K562 (cell line): ENCODE measurements at regions of chr1 and their contacts with region 1.

Region 1: DNA sequence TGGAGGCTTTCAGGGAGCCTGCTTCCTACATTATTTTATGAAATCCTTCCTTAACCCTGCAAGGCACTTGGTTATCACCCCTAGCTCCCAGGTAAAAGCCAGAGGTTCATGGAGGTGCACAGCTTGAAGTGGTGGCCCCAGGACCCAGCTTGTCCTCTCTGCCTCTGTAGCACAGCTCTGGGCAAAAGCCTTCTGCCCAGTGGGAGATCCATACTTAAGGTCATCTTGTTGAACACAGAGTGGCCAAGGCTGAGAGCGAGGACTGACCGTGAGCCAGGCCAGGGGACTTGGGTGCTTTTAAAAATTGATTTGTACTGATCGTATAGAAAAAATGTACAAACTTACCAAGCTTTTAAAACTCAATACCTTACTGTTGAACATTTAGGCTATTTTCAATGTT is 33.4 kb downstream of the KCNA2 start:
- DNase-seq: no peak
- ATAC-seq: no peak
- H3K4me3 ChIP-seq: no peak overlapping the region
- H3K27ac ChIP-seq: no peak overlapping the region
- H3K4me1 ChIP-seq: no peaks in the 10 kb centered on the region
- H3K27me3 ChIP-seq: peaks cover 3 to 5% of the 10 kb centered on the region in 2 experiments; a peak in 3 of 5 replicates
- CTCF ChIP-seq: no peak
- EP300 ChIP-seq: no peak
- POLR2A ChIP-seq: no peak
- RAD21 ChIP-seq: no peak

Region 2: GRCh38 chr1:110482662-110483307 is 90.0 kb before region 1 on chr1:
- CTCF ChIA-PET with region 1: no interaction called
- POLR2A ChIA-PET with region 1: no interaction called
- in situ Hi-C with region 1: no loop called
- intact Hi-C with region 1: no loop called
- DNase-seq: no peak
- ATAC-seq: no peak
- H3K4me3 ChIP-seq: no peak overlapping the region
- H3K27ac ChIP-seq: no peak overlapping the region
- H3K4me1 ChIP-seq: peaks cover 0 to 7% of the 10 kb centered on the region in 2 experiments; a peak in 3 of 5 replicates
- H3K27me3 ChIP-seq: peaks cover 26 to 82% of the 10 kb centered on the region in 2 experiments
- CTCF ChIP-seq: no peak
- EP300 ChIP-seq: no peak
- POLR2A ChIP-seq: no peak
- RAD21 ChIP-seq: no peak

Region 3: DNA sequence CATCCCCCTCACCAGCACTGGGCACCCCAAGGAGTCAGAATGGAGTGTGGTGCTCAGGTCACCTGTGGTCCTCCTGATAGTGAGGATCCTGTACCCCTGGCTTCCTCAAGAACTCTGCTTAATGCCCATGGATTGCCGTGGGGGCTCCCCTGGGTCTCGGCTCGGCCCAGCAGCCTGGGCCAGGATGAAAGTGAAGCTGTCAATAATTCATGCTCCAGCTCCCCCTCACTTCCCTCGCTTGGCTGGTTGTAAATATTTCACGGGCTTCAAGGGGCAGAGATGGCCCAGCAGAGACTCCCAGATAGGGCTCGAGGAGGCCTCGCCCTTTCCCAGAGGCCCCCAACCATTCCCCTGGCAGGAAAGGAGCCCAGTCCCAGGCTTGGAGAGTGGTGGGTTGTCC is 11.2 kb before region 1 on chr1:
- CTCF ChIA-PET with region 1: no interaction called
- POLR2A ChIA-PET with region 1: interaction called, 11 read pairs
- in situ Hi-C with region 1: no loop called
- intact Hi-C with region 1: no loop called
- DNase-seq: no peak
- ATAC-seq: no peak
- H3K4me3 ChIP-seq: no peak overlapping the region
- H3K27ac ChIP-seq: no peak overlapping the region
- H3K4me1 ChIP-seq: no peaks in the 10 kb centered on the region
- H3K27me3 ChIP-seq: peaks cover 6 to 42% of the 10 kb centered on the region in 2 experiments; a peak in 3 of 5 replicates
- CTCF ChIP-seq: no peak
- EP300 ChIP-seq: no peak
- POLR2A ChIP-seq: no peak
- RAD21 ChIP-seq: no peak

Region 4: DNA sequence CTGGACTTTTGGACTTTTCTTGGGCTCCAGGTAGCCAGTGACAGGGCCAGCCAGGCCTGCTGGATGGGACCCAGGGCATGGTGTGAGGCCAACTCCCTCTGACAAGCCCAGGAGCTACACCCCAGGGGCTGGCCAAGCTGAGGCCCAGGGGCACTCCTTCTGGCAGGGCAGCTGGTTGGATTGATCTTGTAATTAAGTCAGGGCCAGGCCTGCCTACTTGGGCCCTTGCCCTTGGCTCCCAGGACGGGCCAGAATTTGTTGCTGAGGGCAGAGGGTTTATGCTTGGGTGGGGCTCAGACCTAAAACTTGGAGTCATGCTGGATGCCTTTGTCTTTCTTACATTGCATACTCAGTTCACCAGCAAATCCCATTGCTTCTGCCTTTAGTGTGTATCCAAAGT is 12.7 kb after region 1 on chr1:
- CTCF ChIA-PET with region 1: no interaction called
- POLR2A ChIA-PET with region 1: interaction called, 10 read pairs
- in situ Hi-C with region 1: no loop called
- intact Hi-C with region 1: no loop called
- DNase-seq: no peak
- ATAC-seq: no peak
- H3K4me3 ChIP-seq: no peak overlapping the region
- H3K27ac ChIP-seq: no peak overlapping the region
- H3K4me1 ChIP-seq: no peaks in the 10 kb centered on the region
- H3K27me3 ChIP-seq: peaks cover 9 to 63% of the 10 kb centered on the region in 2 experiments; a peak in 4 of 5 replicates
- CTCF ChIP-seq: no peak
- EP300 ChIP-seq: no peak
- POLR2A ChIP-seq: no peak
- RAD21 ChIP-seq: no peak

Region 5: GRCh38 chr1:110816930-110817329 is 244.2 kb after region 1 on chr1:
- CTCF ChIA-PET with region 1: no interaction called
- POLR2A ChIA-PET with region 1: no interaction called
- in situ Hi-C with region 1: no loop called
- intact Hi-C with region 1: no loop called
- DNase-seq: no peak
- ATAC-seq: no peak
- H3K4me3 ChIP-seq: no peak overlapping the region
- H3K27ac ChIP-seq: no peak overlapping the region
- H3K4me1 ChIP-seq: no peaks in the 10 kb centered on the region
- H3K27me3 ChIP-seq: 0 out of 5 replicates have a peak, but pooled peaks cover 0 to 5% of the 10 kb centered on the region in 2 experiments
- CTCF ChIP-seq: no peak
- EP300 ChIP-seq: no peak
- POLR2A ChIP-seq: no peak
- RAD21 ChIP-seq: no peak

Region 6: GRCh38 chr1:111174070-111174469 is 601.3 kb after region 1 on chr1:
- CTCF ChIA-PET with region 1: no interaction called
- POLR2A ChIA-PET with region 1: no interaction called
- in situ Hi-C with region 1: no loop called
- intact Hi-C with region 1: no loop called
- DNase-seq: no peak
- ATAC-seq: no peak
- H3K4me3 ChIP-seq: no peak overlapping the region
- H3K27ac ChIP-seq: no peak overlapping the region
- H3K4me1 ChIP-seq: peaks cover 0 to 9% of the 10 kb centered on the region in 2 experiments; a peak in 2 of 5 replicates
- H3K27me3 ChIP-seq: no peaks in the 10 kb centered on the region
- CTCF ChIP-seq: no peak
- EP300 ChIP-seq: no peak
- POLR2A ChIP-seq: no peak
- RAD21 ChIP-seq: no peak